ENCODE measurements at regions of chr1 and their contacts with region 1.

Region 1: GRCh38 chr1:94335950-94336349 is 82.2 kb upstream of the ABCD3 start:
- DNase-seq: peak; percentile 79 to 83
- H3K4me3 ChIP-seq: no peak overlapping the region
- H3K27ac ChIP-seq: peak overlapping the region in 2 of 3 donors; percentile 51 to 72
- H3K4me1 ChIP-seq: peaks cover 13 to 17% of the 10 kb centered on the region in 2 donors
- H3K27me3 ChIP-seq: no peaks in the 10 kb centered on the region
- CTCF ChIP-seq: peak; percentile 42 to 100 (median 94)
- POLR2A ChIP-seq: no peak

Region 2: DNA sequence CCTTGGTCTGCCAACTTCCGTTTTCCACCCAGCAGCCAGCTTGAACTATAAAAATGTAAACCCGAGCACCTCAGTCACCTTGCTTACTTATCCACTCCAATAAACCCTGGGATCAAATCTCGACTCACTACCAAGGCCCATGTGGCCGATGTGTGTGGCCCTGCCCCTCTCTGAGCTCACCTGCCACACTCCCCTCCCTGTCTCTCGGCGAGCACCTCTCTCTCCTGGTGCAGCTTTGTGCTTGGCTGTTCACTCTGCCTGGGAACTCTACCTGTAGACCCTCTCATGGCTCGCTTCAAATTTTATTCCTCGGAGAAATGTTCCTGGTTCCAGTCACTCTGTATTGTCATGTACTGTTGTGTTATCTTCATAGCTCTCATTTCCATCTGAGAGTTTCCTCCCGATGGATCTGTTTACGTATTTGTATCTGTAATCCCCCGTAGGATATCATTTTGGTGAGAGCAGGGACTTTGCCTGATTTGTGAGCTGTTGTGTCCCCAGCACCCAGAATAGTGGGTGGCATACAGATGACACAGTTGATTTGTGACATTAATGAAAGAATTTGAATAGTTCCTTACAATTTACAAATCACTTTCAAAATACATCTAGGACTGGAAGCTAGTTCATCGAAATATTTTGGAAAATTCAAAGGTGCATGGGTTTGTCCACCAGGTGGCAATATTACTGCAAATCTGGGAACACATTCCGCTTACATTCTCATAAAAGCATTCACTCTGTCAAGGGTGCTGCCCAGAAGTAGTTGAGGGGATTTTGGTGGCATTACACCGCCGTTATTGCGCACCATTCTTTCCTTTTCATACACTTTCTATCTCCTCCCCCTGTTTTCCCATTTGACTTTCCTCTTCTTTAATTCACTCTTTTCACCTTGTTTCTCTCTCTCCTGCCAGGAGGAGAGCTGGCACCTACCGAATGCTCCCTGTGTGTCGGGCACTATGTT is 310.3 kb before region 1 on chr1:
- intact Hi-C with region 1: loop called (anchors 5 kb)
- DNase-seq: peak; percentile 39 to 43
- H3K4me3 ChIP-seq: no peak overlapping the region
- H3K27ac ChIP-seq: no peak overlapping the region
- H3K4me1 ChIP-seq: peaks cover 10 to 23% of the 10 kb centered on the region in 2 donors
- H3K27me3 ChIP-seq: no peaks in the 10 kb centered on the region
- CTCF ChIP-seq: peak; percentile 29 to 87 (median 78)
- POLR2A ChIP-seq: no peak

Region 3: GRCh38 chr1:94044290-94044823 is 291.6 kb before region 1 on chr1:
- intact Hi-C with region 1: loop called (anchors 5 kb)
- DNase-seq: peak; percentile 60 to 68
- H3K4me3 ChIP-seq: no peak overlapping the region
- H3K27ac ChIP-seq: peak overlapping the region; percentile 22 to 84 (median 84)
- H3K4me1 ChIP-seq: peaks cover 14 to 36% of the 10 kb centered on the region in 2 donors
- H3K27me3 ChIP-seq: no peaks in the 10 kb centered on the region
- CTCF ChIP-seq: no peak
- POLR2A ChIP-seq: no peak

Region 4: GRCh38 chr1:94067196-94067595 is 268.8 kb before region 1 on chr1:
- intact Hi-C with region 1: no loop called
- DNase-seq: no peak
- H3K4me3 ChIP-seq: no peak overlapping the region
- H3K27ac ChIP-seq: peak overlapping the region in 2 of 3 donors; percentile 86 to 94
- H3K4me1 ChIP-seq: peaks cover 32 to 56% of the 10 kb centered on the region in 2 donors
- H3K27me3 ChIP-seq: no peaks in the 10 kb centered on the region
- CTCF ChIP-seq: no peak
- POLR2A ChIP-seq: no peak

Region 5: DNA sequence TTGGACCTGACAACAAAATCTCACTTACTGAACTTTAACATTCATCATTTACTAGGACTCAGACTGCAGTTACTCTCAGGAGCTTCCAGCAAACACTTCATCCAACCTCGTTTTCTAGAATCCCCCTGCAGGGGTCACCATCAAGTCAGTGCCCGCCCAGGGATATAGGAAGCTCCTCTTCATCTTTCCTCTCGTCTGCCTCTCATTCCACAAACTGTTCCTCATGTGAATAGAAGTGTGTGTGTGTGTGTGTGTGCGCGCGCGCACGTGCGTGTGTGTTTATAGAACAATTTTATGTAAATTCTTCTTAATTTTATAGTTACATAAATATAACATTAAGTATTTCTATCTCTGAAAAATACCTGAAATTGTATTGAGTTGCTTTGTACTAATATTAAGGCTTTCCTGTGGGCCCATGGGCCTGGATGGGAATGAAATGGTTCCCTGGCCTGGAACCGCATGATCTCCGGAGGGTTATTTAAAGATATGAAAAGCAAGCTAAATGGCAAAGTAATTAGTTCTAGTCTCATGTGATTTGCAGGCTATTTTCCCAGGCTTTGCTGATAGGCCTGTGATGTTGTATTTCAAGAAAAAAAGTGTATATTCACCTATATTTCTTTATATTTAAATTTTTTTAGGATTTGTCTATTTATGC is 60.5 kb after region 1 on chr1:
- intact Hi-C with region 1: no loop called
- DNase-seq: no peak
- H3K4me3 ChIP-seq: no peak overlapping the region
- H3K27ac ChIP-seq: no peak overlapping the region
- H3K4me1 ChIP-seq: no peaks in the 10 kb centered on the region
- H3K27me3 ChIP-seq: no peaks in the 10 kb centered on the region
- CTCF ChIP-seq: no peak
- POLR2A ChIP-seq: no peak

Region 6: DNA sequence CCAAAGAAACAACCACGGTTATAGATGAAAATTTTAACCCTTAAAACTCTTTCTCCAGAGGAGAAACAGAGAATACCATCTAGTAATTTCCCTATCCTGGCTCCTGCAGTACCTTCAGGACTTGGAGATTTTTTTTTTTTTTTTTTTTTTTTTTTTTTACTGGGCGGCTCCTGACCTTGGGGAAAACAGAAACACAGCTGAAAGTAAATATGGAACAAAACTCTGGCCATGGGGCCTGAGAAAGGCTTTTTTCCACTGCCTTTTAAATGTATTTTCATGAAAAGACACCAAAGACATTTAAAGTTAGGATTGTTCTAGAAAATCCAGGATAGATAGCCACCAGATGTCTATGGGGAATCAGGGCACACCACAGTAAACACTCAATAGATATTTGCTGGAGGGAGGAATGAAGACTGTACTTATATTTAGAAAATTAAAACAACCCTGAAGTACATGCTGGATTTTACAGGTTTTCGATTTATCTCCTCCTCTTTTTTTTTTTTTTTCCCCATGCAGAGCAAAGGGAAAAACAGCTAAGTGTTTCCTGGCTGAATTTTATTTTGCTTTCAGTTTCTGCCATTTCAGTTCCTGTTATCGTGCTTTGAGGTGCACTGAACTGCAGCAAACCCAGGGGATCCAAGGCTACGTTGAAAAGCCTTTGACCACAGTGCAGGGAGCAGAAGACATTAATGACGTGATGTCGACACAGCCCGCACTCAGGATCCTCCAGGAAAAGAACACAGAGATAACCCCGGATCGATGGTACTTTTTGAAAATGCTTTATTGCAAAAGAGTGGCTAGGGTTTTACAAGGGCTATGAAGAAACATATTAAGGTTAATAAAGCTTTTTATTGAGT is 626.7 kb after region 1 on chr1:
- intact Hi-C with region 1: no loop called
- DNase-seq: peak; percentile 30 to 48
- H3K4me3 ChIP-seq: peak overlapping the region in 2 of 3 donors; percentile 10 to 21
- H3K27ac ChIP-seq: peak overlapping the region; percentile 50 to 90 (median 75)
- H3K4me1 ChIP-seq: peaks cover 2 to 16% of the 10 kb centered on the region in 2 donors
- H3K27me3 ChIP-seq: no peaks in the 10 kb centered on the region
- CTCF ChIP-seq: no peak
- POLR2A ChIP-seq: peak in 1 of 2 donors; percentile 30